ENCODE measurements at regions of chr5 and their contacts with region 1.

Region 1: GRCh38 chr5:122704243-122705036 is 70.4 kb upstream of the SNX2 start:
- DNase-seq: no peak
- H3K4me3 ChIP-seq: no peak overlapping the region
- H3K27ac ChIP-seq: no peak overlapping the region
- H3K4me1 ChIP-seq: no peaks in the 10 kb centered on the region
- H3K27me3 ChIP-seq: no peaks in the 10 kb centered on the region
- CTCF ChIP-seq: peak in 2 of 3 experiments; percentile 28 to 52; a peak in 2 of 4 replicates
- EP300 ChIP-seq: no peak
- POLR2A ChIP-seq: no peak
- RAD21 ChIP-seq: peak; percentile 43 to 50

Region 2: GRCh38 chr5:122515709-122516431 is 188.6 kb before region 1 on chr5:
- CTCF ChIA-PET with region 1: interaction called, 10 read pairs
- POLR2A ChIA-PET with region 1: no interaction called
- DNase-seq: peak in 1 of 2 experiments; percentile 50
- H3K4me3 ChIP-seq: no peak overlapping the region
- H3K27ac ChIP-seq: peak overlapping the region; percentile 2; the same call in 1 of the 2 replicates
- H3K4me1 ChIP-seq: peaks cover 0 to 4% (median 0%) of the 10 kb centered on the region in 4 experiments; a peak in 4 of 7 replicates
- H3K27me3 ChIP-seq: no peaks in the 10 kb centered on the region
- CTCF ChIP-seq: peak; percentile 68 to 91 (median 84)
- EP300 ChIP-seq: no peak
- POLR2A ChIP-seq: no peak
- RAD21 ChIP-seq: peak; percentile 99 to 100

Region 3: GRCh38 chr5:122715095-122715494 is 10.7 kb after region 1 on chr5:
- CTCF ChIA-PET with region 1: interaction called, 42 read pairs
- POLR2A ChIA-PET with region 1: no interaction called
- DNase-seq: no peak
- H3K4me3 ChIP-seq: no peak overlapping the region
- H3K27ac ChIP-seq: no peak overlapping the region
- H3K4me1 ChIP-seq: no peaks in the 10 kb centered on the region
- H3K27me3 ChIP-seq: no peaks in the 10 kb centered on the region
- CTCF ChIP-seq: no peak
- EP300 ChIP-seq: no peak
- POLR2A ChIP-seq: no peak
- RAD21 ChIP-seq: no peak

Region 4: DNA sequence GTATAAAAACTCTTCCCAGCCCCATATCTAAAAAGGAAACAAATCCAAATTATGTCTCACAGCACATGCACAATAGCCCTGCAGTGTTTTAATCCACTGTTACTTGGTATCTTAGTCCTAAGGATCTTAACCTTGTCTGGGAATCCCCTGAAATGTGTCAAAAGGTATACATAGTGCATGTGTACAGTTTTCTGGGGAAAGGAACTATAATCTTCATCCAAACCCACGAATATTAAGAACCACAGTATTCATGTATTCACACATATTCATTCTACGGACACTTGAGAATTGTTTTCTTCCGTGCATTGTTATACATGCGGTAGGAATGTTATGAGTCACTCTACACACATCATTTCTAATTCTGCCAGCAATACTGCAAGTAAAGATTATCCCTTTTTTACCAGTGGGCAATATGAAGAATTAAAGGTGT is 22.7 kb after region 1 on chr5:
- CTCF ChIA-PET with region 1: interaction called, 13 read pairs
- POLR2A ChIA-PET with region 1: no interaction called
- DNase-seq: no peak
- H3K4me3 ChIP-seq: no peak overlapping the region
- H3K27ac ChIP-seq: no peak overlapping the region
- H3K4me1 ChIP-seq: no peaks in the 10 kb centered on the region
- H3K27me3 ChIP-seq: no peaks in the 10 kb centered on the region
- CTCF ChIP-seq: no peak
- EP300 ChIP-seq: no peak
- POLR2A ChIP-seq: no peak
- RAD21 ChIP-seq: no peak

Measured in H1 (cell line).